Activated CD4-positive, alpha-beta T cell treated with anti-CD3 and anti-CD28 coated beads, Interleukin-2, amount 10 ng/mL, durations not matched to agents 7 days and 5 days (primary cell): ENCODE measurements at regions of chr10 and their contacts with region 1.

Region 1: GRCh38 chr10:45044290-45044689 is 43.6 kb downstream of the ZNF22 start:
- DNase-seq: no peak
- H3K4me3 Mint-ChIP-seq: no peak overlapping the region
- H3K27ac Mint-ChIP-seq: no peak overlapping the region
- H3K4me1 Mint-ChIP-seq: no peaks in the 10 kb centered on the region
- H3K27me3 Mint-ChIP-seq: peaks cover 9% of the 10 kb centered on the region

Region 2: DNA sequence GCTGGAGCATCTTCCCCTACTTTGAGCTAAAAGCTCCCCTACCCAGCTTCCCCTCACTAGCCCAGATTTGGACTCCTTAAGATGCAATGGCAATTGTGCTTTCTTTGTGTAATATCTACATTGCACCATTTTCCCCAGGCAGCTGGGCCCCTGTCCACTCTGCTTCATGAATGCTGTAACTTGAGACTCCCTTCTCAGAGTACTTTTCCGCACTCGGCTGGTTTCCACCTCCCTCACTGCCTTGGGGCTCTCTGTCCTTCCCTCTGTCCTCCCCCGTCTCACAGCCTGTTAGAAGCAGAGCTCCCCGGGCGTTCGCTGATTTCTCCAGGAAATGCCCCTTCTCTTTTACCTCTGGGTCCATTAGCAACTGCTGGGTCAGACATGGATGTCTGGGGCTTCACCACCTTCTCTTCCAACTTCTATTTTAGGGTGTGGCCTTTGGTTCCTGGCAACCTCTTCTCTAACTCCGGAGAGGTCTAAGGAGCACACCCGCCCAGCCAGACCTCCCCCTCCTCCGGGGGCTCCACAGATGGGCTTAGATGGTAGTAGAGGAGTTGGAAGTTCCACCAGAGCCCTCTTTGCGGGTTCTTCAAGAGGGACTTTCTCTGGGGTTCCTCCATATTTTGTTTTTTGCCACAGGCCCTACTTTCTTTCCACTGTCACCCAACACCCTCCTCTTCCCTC is 136.1 kb before region 1 on chr10:
- CTCF ChIA-PET with region 1: no interaction called
- POLR2A ChIA-PET with region 1: no interaction called
- DNase-seq: no peak
- H3K4me3 Mint-ChIP-seq: no peak overlapping the region
- H3K27ac Mint-ChIP-seq: no peak overlapping the region
- H3K4me1 Mint-ChIP-seq: peaks cover 4% of the 10 kb centered on the region
- H3K27me3 Mint-ChIP-seq: no peaks in the 10 kb centered on the region

Region 3: DNA sequence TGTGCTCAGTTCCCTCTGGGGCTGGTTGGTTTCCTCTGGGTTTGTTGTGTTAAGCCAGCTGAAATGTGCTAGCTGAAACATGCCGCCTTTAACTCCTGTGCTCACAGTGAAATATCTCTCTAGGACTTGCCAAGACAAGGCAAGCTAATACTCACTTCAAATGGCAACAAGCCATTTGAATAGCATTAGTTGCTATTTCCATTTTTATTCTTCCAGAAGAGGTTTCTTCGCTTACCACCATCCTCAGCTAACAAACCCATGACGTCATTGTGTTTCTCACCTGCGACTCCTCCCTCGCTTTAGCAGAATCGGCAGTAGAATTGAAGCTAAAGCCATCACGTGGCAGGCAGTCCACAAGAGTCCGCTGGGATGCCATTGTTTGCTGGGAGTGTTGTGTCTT is 17.7 kb after region 1 on chr10:
- CTCF ChIA-PET with region 1: interaction called, 3 read pairs
- POLR2A ChIA-PET with region 1: interaction called, 13 read pairs
- DNase-seq: no peak
- H3K4me3 Mint-ChIP-seq: no peak overlapping the region
- H3K27ac Mint-ChIP-seq: no peak overlapping the region
- H3K4me1 Mint-ChIP-seq: no peaks in the 10 kb centered on the region
- H3K27me3 Mint-ChIP-seq: peaks cover 4% of the 10 kb centered on the region